ENCODE measurements at regions of chr20 and their contacts with region 1.

Region 1: DNA sequence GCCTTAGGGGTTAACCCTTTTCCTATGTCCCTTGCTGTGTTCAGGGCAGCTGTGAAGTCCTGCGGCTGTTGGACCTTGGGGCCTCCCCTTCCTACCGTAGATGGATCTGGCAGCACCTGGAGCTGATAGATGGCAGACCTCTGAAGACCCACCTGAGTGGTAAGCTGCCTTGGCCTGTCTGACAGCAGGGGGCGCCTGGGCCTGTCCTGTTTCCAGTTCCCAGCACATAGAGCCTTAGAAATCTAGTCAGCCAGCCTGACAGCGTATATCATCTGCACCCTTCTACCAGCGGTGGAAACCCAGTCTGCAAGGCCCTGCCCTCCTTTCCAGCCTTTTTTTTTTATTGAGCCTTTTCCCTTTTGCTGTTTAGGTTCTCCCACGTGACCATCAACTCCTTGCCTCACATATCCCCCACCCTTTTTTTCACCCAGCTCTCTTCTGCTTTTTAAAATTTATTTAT is 26.6 kb downstream of the CNBD2 start:
- DNase-seq: peak; percentile 88
- H3K4me3 ChIP-seq: no peak overlapping the region
- H3K27ac ChIP-seq: no peak overlapping the region
- H3K4me1 ChIP-seq: peaks cover 4% of the 10 kb centered on the region
- H3K27me3 ChIP-seq: no peaks in the 10 kb centered on the region

Region 2: DNA sequence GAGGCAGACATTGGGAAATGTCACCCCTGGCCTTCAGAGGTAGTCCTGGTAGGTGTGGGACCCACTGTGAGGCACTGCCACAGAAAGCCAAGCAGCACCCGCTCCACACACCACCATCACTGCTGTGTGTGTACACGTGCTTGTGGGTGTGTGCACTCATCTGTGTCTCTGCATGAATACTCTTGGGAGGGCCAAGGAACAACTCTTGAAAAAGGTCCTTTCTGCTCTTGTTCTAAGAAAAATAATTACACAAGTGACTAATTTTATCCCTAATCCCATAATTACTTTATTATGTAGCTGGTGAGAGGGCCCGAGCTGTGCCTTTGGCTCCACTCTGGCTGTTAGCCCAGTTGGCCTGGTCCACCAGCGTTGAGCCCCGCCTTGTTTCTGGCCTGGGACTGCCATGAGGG is 137.8 kb after region 1 on chr20:
- in situ Hi-C with region 1: loop called (anchors 5 kb)
- DNase-seq: no peak
- H3K4me3 ChIP-seq: no peak overlapping the region
- H3K27ac ChIP-seq: no peak overlapping the region
- H3K4me1 ChIP-seq: peaks cover 11% of the 10 kb centered on the region
- H3K27me3 ChIP-seq: no peaks in the 10 kb centered on the region

Region 3: DNA sequence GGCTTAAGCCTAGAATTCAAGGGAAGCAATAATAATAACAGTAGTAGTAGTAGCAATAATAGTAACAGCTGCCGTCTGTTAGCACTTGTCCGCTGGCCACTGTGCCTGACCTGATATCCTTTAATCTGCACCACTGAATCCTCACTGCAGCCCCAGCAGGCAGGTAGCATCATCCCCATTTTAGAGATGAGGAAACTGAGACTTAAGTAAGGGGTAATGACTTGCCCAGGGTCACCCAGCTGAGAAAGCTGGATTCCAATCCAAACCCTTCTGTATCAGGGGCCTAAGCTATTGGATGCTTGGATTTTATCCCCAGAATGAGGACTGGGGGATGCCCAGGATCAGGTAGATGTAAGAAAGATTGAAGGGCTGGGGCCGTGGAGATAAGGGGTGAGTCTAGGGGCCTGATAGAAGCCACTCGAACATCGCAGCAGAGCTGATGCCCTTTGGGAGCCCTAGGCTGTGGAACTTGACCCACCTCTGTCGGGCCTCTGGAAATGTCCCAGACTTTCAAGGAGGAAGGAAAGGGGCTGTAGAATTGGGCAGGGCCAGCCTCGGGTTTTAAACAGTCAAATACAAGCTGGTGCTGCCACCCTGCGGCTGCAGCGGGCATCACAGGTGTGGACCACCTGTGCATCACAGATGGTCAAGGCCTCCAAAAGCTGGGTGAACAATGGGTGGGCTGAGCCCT is 444.2 kb after region 1 on chr20:
- in situ Hi-C with region 1: loop called (anchors 25 kb)
- DNase-seq: peak; percentile 70
- H3K4me3 ChIP-seq: no peak overlapping the region
- H3K27ac ChIP-seq: no peak overlapping the region
- H3K4me1 ChIP-seq: no peaks in the 10 kb centered on the region
- H3K27me3 ChIP-seq: 0 out of 2 replicates have a peak, but pooled peaks cover 1% of the 10 kb centered on the region

Measured in GM23248 (cell line).